Colonic mucosa (tissue), 4 donors: ENCODE measurements at regions of chr7 and their contacts with region 1.

Region 1: DNA sequence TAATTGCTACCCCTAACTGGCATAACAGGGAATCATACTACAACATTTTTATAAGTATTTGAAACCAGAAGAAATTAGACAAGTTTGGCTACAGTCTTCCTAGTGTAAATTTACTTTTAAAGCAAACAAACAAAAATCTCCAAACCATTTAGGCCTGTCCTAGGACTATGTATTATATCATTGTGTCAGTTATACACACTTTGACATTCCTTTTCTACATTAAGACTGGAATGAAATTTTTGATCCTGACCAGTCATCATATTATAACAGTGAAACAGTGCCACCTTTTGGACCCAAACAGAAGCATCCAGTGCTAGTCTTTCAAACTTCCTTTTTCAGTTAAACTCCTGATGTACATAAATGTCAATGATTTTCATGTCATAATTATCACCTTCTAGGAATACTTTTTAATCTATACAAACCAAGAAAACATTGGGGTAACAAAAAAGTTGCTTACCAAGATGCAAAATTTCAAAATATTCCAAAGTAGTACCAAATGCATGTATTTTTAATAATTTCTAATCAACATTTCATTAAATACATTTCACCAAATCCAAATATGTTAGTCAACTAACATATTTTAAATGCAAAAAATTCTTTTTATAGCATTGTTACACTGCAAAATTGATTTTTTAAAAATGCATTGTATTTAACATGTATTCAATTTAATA is 75.7 kb downstream of the IMMP2L start:
- DNase-seq: no peak
- H3K4me3 ChIP-seq: no peak overlapping the region
- H3K27ac ChIP-seq: no peak overlapping the region
- H3K4me1 ChIP-seq: no peaks in the 10 kb centered on the region
- H3K27me3 ChIP-seq: no peaks in the 10 kb centered on the region
- CTCF ChIP-seq: peak; percentile 67

Region 2: GRCh38 chr7:111098011-111098925 is 388.3 kb before region 1 on chr7:
- intact Hi-C with region 1: loop called (anchors 10 kb)
- DNase-seq: no peak
- H3K4me3 ChIP-seq: no peak overlapping the region
- H3K27ac ChIP-seq: no peak overlapping the region
- H3K4me1 ChIP-seq: no peaks in the 10 kb centered on the region
- H3K27me3 ChIP-seq: no peaks in the 10 kb centered on the region
- CTCF ChIP-seq: peak; percentile 53

Region 3: GRCh38 chr7:111150709-111151108 is 335.9 kb before region 1 on chr7:
- intact Hi-C with region 1: loop called (anchors 5 kb)
- DNase-seq: no peak
- H3K4me3 ChIP-seq: no peak overlapping the region
- H3K27ac ChIP-seq: no peak overlapping the region
- H3K4me1 ChIP-seq: no peaks in the 10 kb centered on the region
- H3K27me3 ChIP-seq: no peaks in the 10 kb centered on the region
- CTCF ChIP-seq: no peak

Region 4: GRCh38 chr7:111735661-111736551 is 249.3 kb after region 1 on chr7:
- intact Hi-C with region 1: loop called (anchors 10 kb)
- DNase-seq: peak; percentile 73
- H3K4me3 ChIP-seq: no peak overlapping the region
- H3K27ac ChIP-seq: no peak overlapping the region
- H3K4me1 ChIP-seq: no peaks in the 10 kb centered on the region
- H3K27me3 ChIP-seq: no peaks in the 10 kb centered on the region
- CTCF ChIP-seq: peak; percentile 62